Activated naive CD4-positive, alpha-beta T cell treated with anti-CD3 and anti-CD28 coated beads for 36 hours (primary cell): ENCODE measurements at regions of chr13 and their contacts with region 1.

Region 1: GRCh38 chr13:33542283-33543088 is 256.9 kb upstream of the STARD13 start:
- DNase-seq: peak; percentile 98
- H3K4me3 Mint-ChIP-seq: peak overlapping the region; percentile 79
- H3K27ac Mint-ChIP-seq: peak overlapping the region; percentile 99
- H3K4me1 Mint-ChIP-seq: peaks cover 54% of the 10 kb centered on the region
- H3K27me3 Mint-ChIP-seq: no peaks in the 10 kb centered on the region

Region 2: GRCh38 chr13:32443111-32443510 is 1099.4 kb before region 1 on chr13:
- CTCF ChIA-PET with region 1: no interaction called
- intact Hi-C with region 1: loop called (anchors 1 kb)
- DNase-seq: peak; percentile 61
- H3K4me3 Mint-ChIP-seq: no peak overlapping the region
- H3K27ac Mint-ChIP-seq: no peak overlapping the region
- H3K4me1 Mint-ChIP-seq: peaks cover 14% of the 10 kb centered on the region
- H3K27me3 Mint-ChIP-seq: no peaks in the 10 kb centered on the region

Region 3: GRCh38 chr13:32737111-32737571 is 805.3 kb before region 1 on chr13:
- CTCF ChIA-PET with region 1: no interaction called
- intact Hi-C with region 1: loop called (anchors 5 kb)
- DNase-seq: no peak
- H3K4me3 Mint-ChIP-seq: peak overlapping the region; percentile 71
- H3K27ac Mint-ChIP-seq: peak overlapping the region; percentile 81
- H3K4me1 Mint-ChIP-seq: peaks cover 42% of the 10 kb centered on the region
- H3K27me3 Mint-ChIP-seq: no peaks in the 10 kb centered on the region

Region 4: DNA sequence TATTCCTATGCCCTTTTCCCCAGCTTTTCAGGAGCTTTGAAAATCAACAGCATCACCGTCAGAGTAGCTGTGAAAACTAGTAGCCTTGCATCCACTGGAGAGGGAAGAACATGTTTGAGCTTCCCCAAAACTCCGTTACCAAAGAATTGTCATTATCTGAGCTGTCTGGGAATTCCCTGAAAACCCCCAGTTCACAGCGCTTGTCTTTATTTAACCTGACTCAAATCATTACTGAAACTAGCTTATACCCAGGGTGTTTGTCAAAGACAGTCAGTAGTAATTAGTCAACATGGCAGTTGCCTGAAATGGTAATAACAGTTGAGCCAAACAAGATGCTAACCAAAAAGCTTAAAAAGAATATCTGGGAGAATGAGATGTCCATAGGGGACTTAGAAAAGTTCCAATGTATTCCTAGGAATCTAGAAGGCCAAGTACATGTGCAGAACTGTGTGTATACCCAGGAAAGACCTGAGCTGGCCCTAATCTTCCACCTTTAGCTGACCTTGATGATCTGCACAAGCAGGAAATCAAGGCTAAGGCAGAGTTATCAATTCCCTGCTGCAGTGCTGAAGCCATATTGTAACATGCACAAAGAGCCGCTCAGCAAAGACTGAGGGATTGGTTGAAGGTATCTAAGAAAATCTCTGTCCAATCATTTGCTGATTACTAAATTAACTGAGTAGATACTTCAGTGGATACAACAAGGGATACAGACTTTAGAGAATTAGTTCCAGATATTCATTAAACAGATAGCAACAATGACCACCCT is 395.5 kb before region 1 on chr13:
- CTCF ChIA-PET with region 1: no interaction called
- intact Hi-C with region 1: loop called (anchors 1 kb)
- DNase-seq: peak; percentile 38
- H3K4me3 Mint-ChIP-seq: no peak overlapping the region
- H3K27ac Mint-ChIP-seq: no peak overlapping the region
- H3K4me1 Mint-ChIP-seq: peaks cover 9% of the 10 kb centered on the region
- H3K27me3 Mint-ChIP-seq: peaks cover 17% of the 10 kb centered on the region

Region 5: GRCh38 chr13:33678906-33679657 is 136.6 kb after region 1 on chr13:
- CTCF ChIA-PET with region 1: no interaction called
- intact Hi-C with region 1: loop called (anchors 1 kb)
- DNase-seq: peak; percentile 90
- H3K4me3 Mint-ChIP-seq: peak overlapping the region; percentile 49
- H3K27ac Mint-ChIP-seq: peak overlapping the region; percentile 93
- H3K4me1 Mint-ChIP-seq: peaks cover 30% of the 10 kb centered on the region
- H3K27me3 Mint-ChIP-seq: peaks cover 3% of the 10 kb centered on the region

Region 6: DNA sequence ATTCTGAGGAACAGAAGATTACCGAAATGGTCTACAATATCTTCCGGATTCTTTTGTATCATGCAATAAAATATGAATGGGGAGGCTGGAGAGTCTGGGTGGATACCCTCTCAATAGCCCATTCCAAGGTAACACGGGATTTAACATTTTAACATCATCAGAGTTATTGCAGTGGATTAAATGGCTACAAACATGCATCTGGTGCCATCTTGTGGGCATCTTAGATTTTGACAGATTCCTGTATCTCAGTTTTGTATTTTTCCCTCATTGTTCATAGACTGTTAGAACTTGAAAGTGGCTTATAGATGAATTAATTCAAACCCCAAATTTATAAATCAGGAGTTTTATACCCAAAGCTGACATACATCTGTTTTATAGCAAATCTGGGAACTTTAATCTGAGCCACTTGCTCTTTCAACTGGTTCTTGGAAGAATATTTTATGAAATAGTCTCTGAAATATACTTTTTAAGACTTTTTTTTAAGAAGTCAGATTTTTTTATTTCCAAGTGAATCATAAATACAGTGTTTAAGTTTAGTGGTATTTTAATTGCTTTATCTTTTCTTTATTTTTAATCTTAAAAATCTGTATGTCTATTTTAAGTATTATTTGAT is 1614.8 kb after region 1 on chr13:
- CTCF ChIA-PET with region 1: no interaction called
- intact Hi-C with region 1: loop called (anchors 2 kb)
- DNase-seq: peak; percentile 53
- H3K4me3 Mint-ChIP-seq: no peak overlapping the region
- H3K27ac Mint-ChIP-seq: no peak overlapping the region
- H3K4me1 Mint-ChIP-seq: peaks cover 3% of the 10 kb centered on the region
- H3K27me3 Mint-ChIP-seq: no peaks in the 10 kb centered on the region